Posterior vena cava (tissue), 2 donors: ENCODE measurements at regions of chr5 and their contacts with region 1.

Region 1: DNA sequence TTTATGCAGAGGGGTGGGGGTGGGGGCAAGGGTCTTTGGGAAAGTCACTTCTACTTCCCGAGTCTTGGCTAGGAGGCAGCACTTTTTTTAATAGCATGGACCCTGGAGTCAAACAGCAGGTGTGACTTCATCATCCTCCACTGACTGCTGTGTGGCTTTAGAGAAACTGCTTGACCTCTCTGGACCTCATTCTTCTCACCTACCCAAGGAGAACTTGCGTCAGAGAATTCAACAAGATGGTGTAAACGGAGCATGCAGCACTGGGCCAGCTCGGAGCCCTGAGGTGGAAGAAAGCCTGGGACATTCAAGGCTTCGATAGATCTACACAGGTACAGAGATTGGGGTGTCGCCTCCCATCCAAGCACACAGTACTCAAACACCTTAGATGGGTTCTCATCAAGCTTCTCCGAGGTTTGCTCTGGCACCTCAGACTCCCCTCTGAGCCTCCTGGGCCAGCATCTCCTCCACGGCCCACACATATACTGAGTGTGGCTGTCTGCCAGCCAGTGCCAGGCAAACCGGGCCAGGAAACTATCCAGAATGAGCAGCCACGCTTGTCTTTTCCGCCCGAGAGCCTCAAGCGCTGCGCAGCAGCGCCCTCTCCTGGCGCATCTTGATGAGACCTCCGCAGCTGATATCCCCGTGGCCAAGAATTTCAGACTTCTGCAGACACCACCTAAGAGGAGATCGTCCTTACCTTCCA is 4.6 kb upstream of the SLC25A48 start:
- DNase-seq: peak; percentile 83

Region 2: DNA sequence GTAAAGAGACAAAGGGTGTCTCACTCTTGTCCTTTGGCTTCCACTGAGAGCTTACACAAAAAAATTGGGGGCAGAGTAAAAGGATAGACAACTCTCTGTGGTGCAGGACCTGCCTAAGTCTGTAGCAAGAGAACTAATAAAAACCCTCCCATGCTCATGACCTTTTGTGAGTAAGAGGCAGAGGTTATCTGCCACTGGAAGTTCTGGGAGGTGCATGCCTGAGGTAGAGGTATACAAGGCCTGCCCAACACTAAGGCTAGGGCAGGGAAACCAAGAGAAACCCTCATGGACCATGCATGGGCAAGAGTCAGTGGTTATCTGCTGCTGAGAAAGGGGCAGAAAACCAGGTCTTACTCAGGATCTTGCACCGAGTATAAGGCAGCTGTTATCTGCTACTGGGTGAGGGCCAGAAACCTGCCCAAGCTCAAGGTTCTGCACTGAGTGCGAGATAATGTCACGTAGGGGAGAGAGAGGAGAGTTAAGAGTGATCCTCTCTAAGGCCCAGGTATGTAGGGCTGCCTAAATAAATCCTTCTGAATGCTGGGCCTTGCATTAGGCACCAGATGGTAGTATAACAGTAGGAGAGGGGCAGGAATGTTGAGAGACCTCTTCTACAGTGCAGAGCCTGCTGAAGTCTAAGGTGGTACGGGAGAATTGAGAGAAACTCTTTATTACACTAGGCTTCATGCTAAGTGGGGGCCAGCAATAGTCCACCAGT is 574.2 kb before region 1 on chr5:
- intact Hi-C with region 1: loop called in 1 of 2 experiments (anchors 5 kb)
- DNase-seq: no peak

Region 3: DNA sequence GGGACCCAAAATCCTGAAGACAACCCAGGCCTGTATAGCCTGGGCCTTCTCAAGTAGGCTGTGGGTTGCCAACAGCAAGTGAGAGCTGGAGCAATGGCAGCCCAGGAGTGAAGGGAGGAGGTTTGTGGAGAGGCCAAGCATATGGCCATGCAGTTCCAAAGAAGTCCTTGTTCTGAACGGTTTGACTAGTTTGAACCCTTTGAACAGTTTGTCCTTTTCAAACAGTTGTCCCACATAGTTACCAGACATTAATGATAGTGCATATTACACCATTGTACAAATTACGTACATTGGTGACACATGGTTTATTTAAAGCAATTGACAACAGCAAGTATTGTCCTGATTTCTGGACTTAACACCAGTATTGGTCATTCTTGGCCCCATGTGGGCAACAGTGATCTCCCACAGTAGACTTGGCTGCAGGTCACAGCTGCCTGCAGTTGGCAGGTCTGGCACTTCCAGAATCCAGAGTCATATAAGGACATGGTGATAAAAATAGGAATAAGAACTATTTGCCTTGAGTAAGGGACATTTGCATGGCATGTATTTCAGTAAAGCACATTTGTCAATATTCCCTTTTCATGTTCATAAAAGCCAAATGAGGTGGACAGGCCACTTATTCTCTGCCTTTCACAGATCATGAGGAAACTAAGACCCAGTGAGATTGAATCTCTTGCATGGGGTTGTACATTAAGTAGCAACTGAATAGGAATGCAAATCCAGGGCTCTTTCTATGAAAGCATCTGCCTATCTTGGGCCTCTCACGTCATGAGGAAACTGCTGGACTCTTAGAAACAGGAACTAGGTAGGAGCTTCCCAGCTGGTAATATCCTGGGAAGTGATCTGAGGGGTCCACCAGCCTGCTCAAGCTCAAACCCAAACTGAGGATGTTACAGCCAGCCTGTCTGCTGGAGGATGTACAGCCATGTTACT is 34.9 kb after region 1 on chr5:
- intact Hi-C with region 1: no loop called
- DNase-seq: no peak